CD8-positive, alpha-beta memory T cell (primary cell): ENCODE measurements at regions of chr5 and their contacts with region 1.

Region 1: GRCh38 chr5:52787600-52788504 is at the starts of genes ITGA1 and PELO:
- DNase-seq: peak; percentile 34 to 80 (median 55)
- H3K4me3 ChIP-seq: peak within 1 kb of the TSS; percentile 75
- H3K4me3 Mint-ChIP-seq: peak within 1 kb of the TSS; percentile 91 to 97 (median 93)
- H3K27ac ChIP-seq: no peak within 1 kb of the TSS
- H3K27ac Mint-ChIP-seq: peak within 1 kb of the TSS; percentile 6 to 95 (median 85)
- H3K4me1 ChIP-seq: peaks cover 10% of the 10 kb centered on the region
- H3K4me1 Mint-ChIP-seq: peaks cover 39 to 56% (median 56%) of the 10 kb centered on the region in 3 donors
- H3K27me3 ChIP-seq: no peaks in the 10 kb centered on the region
- H3K27me3 Mint-ChIP-seq: no peaks in the 10 kb centered on the region
- total RNA-seq, gene ITGA1: 21.9 to 26.3 TPM
- total RNA-seq, gene PELO: 35.9 to 37.3 TPM

Region 2: DNA sequence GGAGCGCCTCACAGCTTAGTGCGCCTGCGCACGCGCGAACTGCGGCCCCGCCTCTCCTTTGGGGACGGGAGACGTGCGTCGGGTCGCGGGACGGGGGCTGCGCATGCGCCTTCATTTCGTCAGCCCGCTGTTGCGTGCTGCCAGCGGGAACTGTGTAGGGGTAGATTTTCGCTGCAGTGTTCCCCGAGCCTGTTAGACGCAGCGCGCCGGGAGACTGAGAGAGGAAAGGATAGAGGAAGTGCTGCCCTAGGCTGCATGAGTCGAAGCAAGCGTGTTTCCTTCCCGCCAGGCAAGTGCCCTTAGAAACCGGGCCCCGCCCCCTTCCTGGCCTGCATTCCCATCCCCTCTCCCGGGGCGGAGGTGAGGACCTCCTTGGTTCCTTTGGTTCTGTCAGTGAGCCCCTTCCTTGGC is 12.1 kb after region 1 on chr5:
- CTCF ChIA-PET with region 1: interaction called, 26 read pairs
- POLR2A ChIA-PET with region 1: interaction called, 12 read pairs
- DNase-seq: peak; percentile 92 to 97 (median 94)
- H3K4me3 ChIP-seq: peak overlapping the region; percentile 97
- H3K4me3 Mint-ChIP-seq: peak overlapping the region; percentile 93 to 99 (median 97)
- H3K27ac ChIP-seq: peak overlapping the region; percentile 88
- H3K27ac Mint-ChIP-seq: peak overlapping the region; percentile 91 to 97 (median 95)
- H3K4me1 ChIP-seq: peaks cover 39% of the 10 kb centered on the region
- H3K4me1 Mint-ChIP-seq: peaks cover 65 to 81% (median 79%) of the 10 kb centered on the region in 3 donors
- H3K27me3 ChIP-seq: no peaks in the 10 kb centered on the region
- H3K27me3 Mint-ChIP-seq: peaks cover 0 to 1% of the 10 kb centered on the region in 2 donors

Region 3: GRCh38 chr5:52840277-52841050 is 52.6 kb after region 1 on chr5:
- CTCF ChIA-PET with region 1: no interaction called
- POLR2A ChIA-PET with region 1: no interaction called
- DNase-seq: no peak
- H3K4me3 ChIP-seq: no peak overlapping the region
- H3K4me3 Mint-ChIP-seq: no peak overlapping the region
- H3K27ac ChIP-seq: no peak overlapping the region
- H3K27ac Mint-ChIP-seq: peak overlapping the region in 2 of 8 donors; percentile 17 to 75
- H3K4me1 ChIP-seq: no peaks in the 10 kb centered on the region
- H3K4me1 Mint-ChIP-seq: peaks cover 9 to 36% (median 16%) of the 10 kb centered on the region in 3 donors
- H3K27me3 ChIP-seq: no peaks in the 10 kb centered on the region
- H3K27me3 Mint-ChIP-seq: no peaks in the 10 kb centered on the region